HEK293T (cell line): ENCODE measurements at regions of chr6 and their contacts with region 1.

Region 1: DNA sequence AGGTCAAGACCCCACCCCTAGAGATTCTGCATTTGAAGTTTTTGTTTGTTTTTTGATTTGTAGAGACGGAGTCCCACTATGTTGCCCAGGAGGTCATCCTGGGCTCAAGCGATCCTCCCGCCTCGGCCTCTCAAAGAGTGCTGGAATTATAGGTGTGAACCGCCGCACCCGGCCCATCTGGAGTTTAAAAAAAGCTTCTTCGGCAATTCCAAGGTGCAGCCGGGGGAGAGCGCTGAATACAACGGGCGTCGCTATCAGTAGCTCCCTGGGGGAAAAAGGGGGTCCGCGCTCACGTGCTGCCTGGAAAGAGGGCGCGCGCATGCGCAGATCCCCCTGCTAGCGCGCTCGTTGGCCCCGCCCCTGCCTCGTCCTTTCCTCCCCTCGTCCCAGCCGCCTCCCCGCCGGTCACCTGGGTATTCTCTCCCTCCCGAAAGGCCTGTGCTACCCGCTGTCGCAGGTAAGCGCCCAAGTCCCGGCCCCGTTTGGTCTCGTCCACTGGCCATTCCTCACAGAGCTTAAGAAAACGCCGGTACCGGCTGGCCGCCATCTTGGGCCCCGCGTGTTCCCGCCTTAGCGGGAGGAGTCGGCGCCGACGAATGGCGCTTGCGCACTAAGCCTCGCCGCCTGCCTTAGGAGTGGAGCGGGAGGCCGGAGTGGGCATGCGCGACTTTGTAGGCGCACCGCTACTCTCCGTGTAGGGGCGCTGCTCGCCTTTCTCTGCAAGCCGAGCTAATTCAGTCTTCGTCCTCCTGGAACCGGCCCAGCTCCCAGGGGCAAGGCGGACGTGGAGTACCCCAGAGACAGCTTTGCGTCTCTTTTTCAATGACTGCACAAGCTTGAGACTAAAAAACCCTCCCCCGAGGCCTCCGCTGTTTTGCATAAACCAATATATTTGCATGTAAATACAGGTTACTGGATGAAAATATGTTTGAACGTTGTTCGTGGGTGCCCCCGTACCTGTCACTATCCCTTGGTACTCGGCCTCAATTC is at the start of gene UQCC2:
- DNase-seq: peak; percentile 97

Region 2: GRCh38 chr6:33585403-33586107 is 125.9 kb before region 1 on chr6:
- CTCF ChIA-PET with region 1: interaction called, 7 read pairs
- POLR2A ChIA-PET with region 1: interaction called, 11 read pairs
- DNase-seq: peak; percentile 84

Region 3: DNA sequence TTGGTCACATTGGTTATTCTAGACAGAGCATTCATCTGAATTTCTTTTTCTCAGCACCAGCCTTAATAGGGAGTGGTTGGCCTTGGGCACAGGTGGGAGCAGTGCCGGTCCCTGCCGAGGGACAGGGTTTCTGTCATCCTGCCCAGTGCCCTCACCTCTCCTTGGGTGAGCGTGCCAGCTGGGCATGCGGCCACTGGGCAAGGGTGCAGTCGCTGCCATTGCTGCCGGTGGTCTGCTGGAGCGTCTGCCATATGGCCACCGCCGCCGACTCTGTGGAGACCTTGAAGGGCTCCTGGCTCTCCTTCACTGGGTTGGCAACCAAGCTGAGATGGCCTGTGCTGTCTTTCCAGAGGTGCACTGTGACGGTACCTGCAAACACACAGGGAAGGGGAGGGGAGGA is 16.5 kb after region 1 on chr6:
- CTCF ChIA-PET with region 1: interaction called, 6 read pairs
- POLR2A ChIA-PET with region 1: interaction called, 17 read pairs
- DNase-seq: no peak

Region 4: GRCh38 chr6:33744001-33744848 is 32.8 kb after region 1 on chr6:
- CTCF ChIA-PET with region 1: interaction called, 10 read pairs
- POLR2A ChIA-PET with region 1: interaction called, 10 read pairs
- DNase-seq: peak; percentile 87

Region 5: GRCh38 chr6:33771146-33772081 is 60.0 kb after region 1 on chr6:
- CTCF ChIA-PET with region 1: interaction called, 7 read pairs
- POLR2A ChIA-PET with region 1: interaction called, 19 read pairs
- DNase-seq: peak; percentile 85

Region 6: DNA sequence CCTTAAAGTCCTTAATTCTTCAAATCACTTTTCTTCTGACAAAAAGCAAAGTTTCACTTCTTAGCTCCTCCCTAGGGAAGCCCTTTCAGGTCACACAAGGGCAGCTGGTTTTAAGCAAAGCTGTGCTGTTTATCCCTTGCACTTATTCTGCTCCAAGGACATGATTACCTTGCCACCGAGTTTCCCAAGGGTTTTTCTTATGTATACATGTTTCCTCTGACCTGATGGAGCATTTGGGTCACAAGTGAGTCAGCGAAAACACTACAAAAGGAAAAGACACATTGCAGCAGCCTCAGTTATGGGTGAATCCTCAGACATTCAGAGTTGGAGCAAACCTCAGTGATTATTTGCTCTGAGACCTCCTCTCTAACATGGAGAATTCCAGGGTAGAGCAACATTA is 1011.8 kb after region 1 on chr6:
- CTCF ChIA-PET with region 1: no interaction called
- POLR2A ChIA-PET with region 1: no interaction called
- DNase-seq: no peak